RWPE1 (cell line): ENCODE measurements at regions of chr15 and their contacts with region 1.

Region 1: DNA sequence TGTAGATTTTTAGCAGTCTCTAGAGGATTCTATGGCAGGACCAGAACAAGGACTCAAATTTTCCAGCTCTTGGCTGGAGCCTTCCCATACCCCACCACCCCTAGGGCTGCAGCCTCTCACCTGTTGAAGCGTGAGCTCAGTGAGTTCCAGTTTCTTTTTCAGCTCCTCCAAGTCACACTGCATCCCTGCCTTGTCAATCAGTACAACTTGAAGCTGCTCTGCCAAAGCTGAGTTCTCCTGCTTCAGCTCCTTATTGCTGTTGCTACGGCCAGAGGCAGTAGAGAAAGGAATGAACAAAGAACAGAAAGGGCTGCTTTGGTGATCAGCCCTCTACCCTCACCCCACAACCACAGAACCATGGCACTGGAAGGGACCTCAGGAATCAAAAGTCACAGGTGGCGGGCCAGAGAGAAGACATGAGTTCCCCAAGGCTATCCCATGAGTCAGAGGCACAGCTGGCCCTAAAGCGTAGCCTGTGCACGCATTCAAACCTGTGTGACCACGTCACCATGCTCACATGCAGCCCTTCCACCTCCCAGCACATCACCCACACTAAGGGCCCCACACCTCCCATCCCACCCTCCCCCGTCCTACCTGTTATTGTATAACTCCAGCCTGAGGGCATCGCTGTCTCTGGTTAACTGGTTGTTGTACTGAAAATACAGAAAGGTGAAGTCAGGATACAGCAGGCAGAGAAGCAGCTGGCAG is 83.3 kb upstream of the C2CD4B start:
- DNase-seq: peak; percentile 45
- H3K27ac ChIP-seq: no peak overlapping the region
- CTCF ChIP-seq: no peak

Region 2: DNA sequence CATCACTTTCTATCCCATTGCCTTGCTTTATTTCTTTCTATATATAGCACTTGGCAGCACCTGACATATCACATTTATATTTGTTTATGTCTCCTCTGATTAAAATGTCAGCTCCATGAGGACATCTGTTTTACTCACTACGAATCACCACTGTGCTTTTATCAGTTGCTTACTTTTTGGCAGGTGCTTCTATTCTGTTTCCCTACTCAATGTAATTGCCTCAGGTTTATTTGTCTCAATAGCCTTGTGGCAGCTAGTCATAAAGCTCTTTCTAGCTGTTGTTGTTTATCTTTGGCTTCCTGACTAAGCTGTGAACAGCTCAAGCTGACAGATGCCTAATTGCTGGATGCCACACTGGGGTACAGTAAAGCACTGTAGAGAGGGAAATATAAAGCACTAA is 273.7 kb before region 1 on chr15:
- CTCF ChIA-PET with region 1: no interaction called
- POLR2A ChIA-PET with region 1: no interaction called
- DNase-seq: no peak
- H3K27ac ChIP-seq: no peak overlapping the region
- CTCF ChIP-seq: no peak

Region 3: DNA sequence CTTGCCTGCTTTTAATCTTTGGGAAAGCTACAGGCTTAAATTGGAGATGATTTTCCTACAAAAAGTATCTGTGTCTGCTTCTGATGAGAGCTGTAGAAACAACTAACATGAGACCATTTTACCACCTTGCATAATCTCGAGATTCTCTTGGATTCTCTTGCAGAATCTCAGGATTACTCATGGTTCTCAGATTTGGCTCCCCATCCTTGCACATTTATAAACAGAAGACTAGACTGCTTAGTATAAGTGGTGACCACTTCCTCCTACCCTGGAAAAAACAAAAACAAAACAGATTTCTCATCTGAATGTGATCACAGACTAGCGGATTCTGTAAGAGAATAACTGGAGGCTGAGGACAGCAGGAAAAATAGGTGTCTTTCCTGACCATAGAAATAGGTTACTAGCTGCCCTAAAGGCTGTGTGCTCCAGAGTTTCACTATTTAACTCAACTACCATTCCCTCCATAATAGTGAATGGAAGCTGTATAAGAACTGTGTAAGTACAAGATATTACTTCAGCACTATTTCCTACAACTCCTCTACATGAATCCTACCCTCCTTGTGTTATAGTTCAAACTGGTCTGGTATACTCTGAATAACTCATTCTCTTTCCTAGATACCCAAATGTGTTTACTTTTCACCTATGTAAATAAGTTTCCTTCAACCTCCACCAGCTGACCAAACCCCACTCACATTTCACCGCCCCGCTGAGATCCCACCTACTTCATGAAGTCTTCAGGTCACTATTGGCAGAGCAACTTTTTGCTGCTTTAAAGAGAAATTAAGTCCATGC is 38.8 kb after region 1 on chr15:
- CTCF ChIA-PET with region 1: no interaction called
- POLR2A ChIA-PET with region 1: interaction called, 12 read pairs
- DNase-seq: no peak
- H3K27ac ChIP-seq: no peak overlapping the region
- CTCF ChIP-seq: no peak